ENCODE measurements at regions of chr15 and their contacts with region 1.

Region 1: DNA sequence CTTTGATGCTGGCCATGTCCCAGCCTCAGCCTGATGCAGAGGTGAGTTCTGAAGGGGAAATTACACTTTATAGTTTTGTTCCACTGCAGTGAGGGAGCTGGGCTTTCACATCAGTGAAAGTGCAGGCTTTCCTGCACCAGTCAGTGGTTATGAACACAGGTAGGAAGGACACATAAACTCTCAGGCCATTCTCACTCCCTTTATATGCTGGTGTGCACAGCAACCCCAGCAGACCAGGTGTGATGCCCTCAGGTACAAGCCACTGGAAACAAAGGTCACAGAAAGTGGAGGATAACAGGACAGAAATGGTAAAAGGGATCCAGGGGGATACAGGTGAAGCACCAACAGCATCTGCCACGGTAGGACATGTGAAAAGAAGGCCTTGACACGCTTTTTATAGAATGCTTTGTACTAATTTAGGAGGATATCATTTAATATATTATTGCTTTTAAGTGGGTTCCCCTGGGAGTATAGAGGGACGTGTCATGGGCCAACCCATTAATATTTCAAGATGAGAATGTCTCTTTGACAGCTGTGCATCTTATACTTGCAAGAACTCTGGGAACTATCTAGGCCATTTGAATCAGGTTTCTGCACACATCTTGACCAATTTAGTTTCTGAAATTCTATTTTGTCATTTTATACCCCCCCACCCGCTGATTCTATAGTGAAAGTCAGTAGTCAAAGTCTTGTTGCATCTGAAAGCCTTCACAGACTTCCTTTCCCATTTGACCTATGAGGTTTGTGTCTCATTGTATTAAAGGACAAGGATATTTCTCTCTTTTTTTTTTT is 25.0 kb upstream of the BLM start:
- DNase-seq: no peak
- ATAC-seq: no peak
- H3K4me3 ChIP-seq: no peak overlapping the region
- H3K4me3 Mint-ChIP-seq: peak overlapping the region in 1 of 10 donors; percentile 33
- H3K27ac ChIP-seq: no peak overlapping the region
- H3K27ac Mint-ChIP-seq: peak overlapping the region in 1 of 9 donors; percentile 40
- H3K4me1 ChIP-seq: no peaks in the 10 kb centered on the region
- H3K4me1 Mint-ChIP-seq: peaks cover 1 to 52% (median 10%) of the 10 kb centered on the region in 7 donors
- H3K27me3 ChIP-seq: no peaks in the 10 kb centered on the region
- H3K27me3 Mint-ChIP-seq: no peaks in the 10 kb centered on the region

Region 2: GRCh38 chr15:90265271-90266060 is 426.7 kb before region 1 on chr15 and contains the start of gene NGRN:
- CTCF ChIA-PET with region 1: no interaction called
- POLR2A ChIA-PET with region 1: no interaction called
- intact Hi-C with region 1: no loop called
- DNase-seq: peak; percentile 81 to 96 (median 93)
- ATAC-seq: peak; percentile 94
- H3K4me3 ChIP-seq: peak within 1 kb of the TSS; percentile 84
- H3K4me3 Mint-ChIP-seq: peak within 1 kb of the TSS; percentile 95 to 99 (median 97)
- H3K27ac ChIP-seq: peak within 1 kb of the TSS; percentile 96
- H3K27ac Mint-ChIP-seq: peak within 1 kb of the TSS; percentile 98 to 100 (median 99)
- H3K4me1 ChIP-seq: peaks cover 36 to 40% of the 10 kb centered on the region in 2 donors
- H3K4me1 Mint-ChIP-seq: peaks cover 22 to 60% (median 48%) of the 10 kb centered on the region in 7 donors
- H3K27me3 ChIP-seq: no peaks in the 10 kb centered on the region
- H3K27me3 Mint-ChIP-seq: no peaks in the 10 kb centered on the region
- total RNA-seq, gene NGRN: 34.1 to 51.5 (median 48.4) TPM

Region 3: DNA sequence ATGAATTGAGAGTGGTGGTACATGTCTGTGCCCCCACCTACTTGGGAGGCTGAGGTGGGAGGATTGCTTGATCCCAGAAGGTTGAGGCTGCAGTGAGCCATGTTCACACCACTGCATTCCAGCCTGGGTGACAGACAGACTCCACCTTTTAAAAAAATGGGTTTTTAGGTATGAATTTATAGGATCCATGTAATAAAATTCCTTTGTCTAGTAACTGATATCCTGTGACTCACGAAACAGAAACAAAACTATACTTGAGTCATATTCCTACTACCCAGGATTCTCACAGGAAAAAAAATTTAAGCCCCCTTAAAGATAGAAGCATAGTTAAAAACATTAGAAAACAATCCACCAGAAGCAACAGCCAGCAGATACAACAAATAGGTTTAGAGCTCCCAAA is 172.5 kb before region 1 on chr15:
- CTCF ChIA-PET with region 1: no interaction called
- POLR2A ChIA-PET with region 1: no interaction called
- intact Hi-C with region 1: loop called (anchors 10 kb)
- DNase-seq: no peak
- ATAC-seq: no peak
- H3K4me3 ChIP-seq: no peak overlapping the region
- H3K4me3 Mint-ChIP-seq: no peak overlapping the region
- H3K27ac ChIP-seq: no peak overlapping the region
- H3K27ac Mint-ChIP-seq: peak overlapping the region in 1 of 9 donors; percentile 19
- H3K4me1 ChIP-seq: no peaks in the 10 kb centered on the region
- H3K4me1 Mint-ChIP-seq: peaks cover 0 to 22% (median 5%) of the 10 kb centered on the region in 7 donors
- H3K27me3 ChIP-seq: no peaks in the 10 kb centered on the region
- H3K27me3 Mint-ChIP-seq: no peaks in the 10 kb centered on the region

Region 4: GRCh38 chr15:90638201-90638691 is 53.9 kb before region 1 on chr15:
- CTCF ChIA-PET with region 1: no interaction called
- POLR2A ChIA-PET with region 1: no interaction called
- intact Hi-C with region 1: no loop called
- DNase-seq: peak in 1 of 9 donors; percentile 19
- ATAC-seq: no peak
- H3K4me3 ChIP-seq: no peak overlapping the region
- H3K4me3 Mint-ChIP-seq: peak overlapping the region in 1 of 10 donors; percentile 26
- H3K27ac ChIP-seq: no peak overlapping the region
- H3K27ac Mint-ChIP-seq: peak overlapping the region in 7 of 9 donors; percentile 22 to 71 (median 44)
- H3K4me1 ChIP-seq: no peaks in the 10 kb centered on the region
- H3K4me1 Mint-ChIP-seq: peaks cover 0 to 6% (median 0%) of the 10 kb centered on the region in 7 donors
- H3K27me3 ChIP-seq: no peaks in the 10 kb centered on the region
- H3K27me3 Mint-ChIP-seq: no peaks in the 10 kb centered on the region